ENCODE measurements at regions of chr2 and their contacts with region 1.

Region 1: DNA sequence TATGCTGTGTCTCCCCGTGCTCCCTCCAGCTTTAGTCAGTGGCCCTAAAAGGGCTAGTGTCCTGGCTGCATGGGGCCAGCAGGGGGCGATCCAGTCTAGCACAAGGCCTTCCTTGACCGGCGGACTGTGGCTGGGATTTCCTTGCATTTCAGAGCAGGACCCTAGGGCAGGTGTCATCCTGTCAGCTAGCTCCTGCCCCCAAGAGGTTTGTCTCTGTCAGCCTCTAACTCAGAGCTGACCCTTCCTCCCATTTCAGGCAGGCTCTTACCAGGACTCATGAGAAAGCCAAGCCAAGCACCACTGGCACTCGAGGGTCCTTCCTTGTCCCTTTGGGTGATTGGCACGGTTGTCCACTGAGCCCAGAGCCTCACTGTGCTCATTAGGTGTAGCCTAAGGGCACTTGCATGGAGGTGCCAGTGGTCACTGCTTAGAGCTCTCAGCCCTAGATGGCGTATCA is 140.3 kb downstream of the RPIA start:
- DNase-seq: peak; percentile 82 to 83
- H3K4me3 ChIP-seq: no peak overlapping the region
- H3K27ac ChIP-seq: no peak overlapping the region
- H3K4me1 ChIP-seq: peaks cover 0 to 7% of the 10 kb centered on the region in 2 donors
- H3K27me3 ChIP-seq: no peaks in the 10 kb centered on the region
- CTCF ChIP-seq: peak; percentile 46 to 91 (median 83)
- POLR2A ChIP-seq: no peak

Region 2: GRCh38 chr2:88874063-88874657 is 42.3 kb after region 1 on chr2:
- intact Hi-C with region 1: no loop called
- DNase-seq: peak; percentile 29 to 40
- H3K4me3 ChIP-seq: no peak overlapping the region
- H3K27ac ChIP-seq: no peak overlapping the region
- H3K4me1 ChIP-seq: no peaks in the 10 kb centered on the region
- H3K27me3 ChIP-seq: no peaks in the 10 kb centered on the region
- CTCF ChIP-seq: peak; percentile 44 to 83 (median 77)
- POLR2A ChIP-seq: no peak

Region 3: GRCh38 chr2:88919087-88919738 is 87.4 kb after region 1 on chr2:
- intact Hi-C with region 1: loop called (anchors 10 kb)
- DNase-seq: peak; percentile 6 to 9
- H3K4me3 ChIP-seq: no peak overlapping the region
- H3K27ac ChIP-seq: no peak overlapping the region
- H3K4me1 ChIP-seq: no peaks in the 10 kb centered on the region
- H3K27me3 ChIP-seq: no peaks in the 10 kb centered on the region
- CTCF ChIP-seq: peak; percentile 23 to 63 (median 44)
- POLR2A ChIP-seq: no peak

Measured in thyroid gland (tissue), 4 donors.